ENCODE measurements at regions of chr4 and their contacts with region 1.

Region 1: GRCh38 chr4:28388455-28388854 is 1527.8 kb downstream of the STIM2 start:
- DNase-seq: no peak
- ATAC-seq: no peak
- H3K4me3 ChIP-seq: no peak overlapping the region
- H3K4me3 Mint-ChIP-seq: no peak overlapping the region
- H3K27ac ChIP-seq: no peak overlapping the region
- H3K27ac Mint-ChIP-seq: no peak overlapping the region
- H3K4me1 ChIP-seq: no peaks in the 10 kb centered on the region
- H3K4me1 Mint-ChIP-seq: no peaks in the 10 kb centered on the region
- H3K27me3 ChIP-seq: no peaks in the 10 kb centered on the region
- H3K27me3 Mint-ChIP-seq: no peaks in the 10 kb centered on the region
- CTCF ChIP-seq: no peak

Region 2: DNA sequence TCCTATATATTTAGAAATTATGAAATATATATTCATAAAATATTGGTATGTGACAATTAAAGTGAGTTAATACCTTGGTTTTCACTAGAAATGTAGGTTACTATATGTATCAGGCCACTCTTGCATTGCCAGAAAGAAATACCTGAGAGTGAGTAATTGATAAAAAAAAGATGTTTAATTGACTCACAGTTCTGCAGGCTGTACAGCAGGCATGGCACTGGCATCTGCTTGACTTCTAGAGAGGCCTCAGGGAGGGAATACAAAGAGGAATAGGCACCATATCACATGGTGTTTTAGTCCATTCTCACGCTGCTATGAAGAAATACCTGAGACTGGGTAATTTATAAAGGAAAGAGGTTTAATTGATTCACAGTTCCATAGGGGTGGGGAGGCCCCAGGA is 32.8 kb after region 1 on chr4:
- CTCF ChIA-PET with region 1: no interaction called
- POLR2A ChIA-PET with region 1: no interaction called
- intact Hi-C with region 1: loop called in 1 of 2 experiments (anchors 2 kb)
- DNase-seq: no peak
- ATAC-seq: no peak
- H3K4me3 ChIP-seq: no peak overlapping the region
- H3K4me3 Mint-ChIP-seq: no peak overlapping the region
- H3K27ac ChIP-seq: no peak overlapping the region
- H3K27ac Mint-ChIP-seq: no peak overlapping the region
- H3K4me1 ChIP-seq: no peaks in the 10 kb centered on the region
- H3K4me1 Mint-ChIP-seq: no peaks in the 10 kb centered on the region
- H3K27me3 ChIP-seq: no peaks in the 10 kb centered on the region
- H3K27me3 Mint-ChIP-seq: no peaks in the 10 kb centered on the region
- CTCF ChIP-seq: no peak